ENCODE measurements at regions of chr5 and their contacts with region 1.

Region 1: DNA sequence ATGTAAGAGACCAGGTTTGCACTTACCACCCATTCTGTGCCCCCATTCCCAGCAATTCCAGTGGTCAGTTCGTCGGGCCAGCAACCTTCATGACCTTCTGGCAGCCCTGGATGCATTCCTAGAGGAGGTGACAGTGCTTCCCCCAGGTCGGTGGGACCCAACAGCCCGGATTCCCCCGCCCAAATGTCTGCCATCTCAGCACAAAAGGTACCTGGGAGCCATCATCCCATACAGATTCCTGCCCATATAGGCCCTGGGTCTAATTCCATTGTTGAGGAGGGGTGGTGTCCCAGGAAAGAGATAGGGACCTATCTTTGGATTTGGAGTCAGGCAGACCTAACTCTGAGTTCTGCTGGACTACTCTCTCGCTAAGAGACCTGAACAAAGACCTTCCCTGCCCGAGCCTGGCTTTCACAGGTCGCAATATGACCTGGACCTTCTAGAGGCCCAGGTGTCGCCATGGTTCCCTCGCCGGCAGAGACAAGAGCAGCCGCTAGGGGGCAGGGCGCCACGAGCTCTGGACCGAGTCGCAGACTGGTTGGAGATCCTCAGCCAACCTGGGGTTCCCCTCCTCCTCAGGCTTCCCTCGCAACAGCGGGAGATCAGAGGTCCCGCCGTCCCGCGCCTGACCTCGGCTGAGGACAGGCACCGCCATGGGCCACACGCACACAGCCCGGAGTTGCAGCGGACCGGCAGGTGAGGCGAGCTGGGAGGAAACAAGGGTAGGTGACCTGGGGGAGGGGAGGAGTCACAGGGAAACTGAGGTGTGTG is 3.1 kb downstream of the SLC4A9 start:
- DNase-seq: peak; percentile 66 to 83 (median 72)
- H3K4me3 ChIP-seq: peak overlapping the region; percentile 46
- H3K4me3 Mint-ChIP-seq: peak overlapping the region in 6 of 7 donors; percentile 61 to 83 (median 78)
- H3K27ac ChIP-seq: no peak overlapping the region
- H3K27ac Mint-ChIP-seq: peak overlapping the region in 2 of 8 donors; percentile 51 to 61
- H3K4me1 ChIP-seq: peaks cover 4% of the 10 kb centered on the region
- H3K4me1 Mint-ChIP-seq: peaks cover 6 to 8% (median 6%) of the 10 kb centered on the region in 3 donors
- H3K27me3 ChIP-seq: no peaks in the 10 kb centered on the region
- H3K27me3 Mint-ChIP-seq: no peaks in the 10 kb centered on the region

Region 2: GRCh38 chr5:140244525-140245025 is 118.5 kb before region 1 on chr5:
- CTCF ChIA-PET with region 1: interaction called, 11 read pairs
- POLR2A ChIA-PET with region 1: no interaction called
- DNase-seq: peak; percentile 44 to 71 (median 51)
- H3K4me3 ChIP-seq: no peak overlapping the region
- H3K4me3 Mint-ChIP-seq: no peak overlapping the region
- H3K27ac ChIP-seq: no peak overlapping the region
- H3K27ac Mint-ChIP-seq: peak overlapping the region in 2 of 8 donors; percentile 53 to 71
- H3K4me1 ChIP-seq: peaks cover 10% of the 10 kb centered on the region
- H3K4me1 Mint-ChIP-seq: peaks cover 4 to 8% (median 5%) of the 10 kb centered on the region in 3 donors
- H3K27me3 ChIP-seq: no peaks in the 10 kb centered on the region
- H3K27me3 Mint-ChIP-seq: no peaks in the 10 kb centered on the region

Region 3: DNA sequence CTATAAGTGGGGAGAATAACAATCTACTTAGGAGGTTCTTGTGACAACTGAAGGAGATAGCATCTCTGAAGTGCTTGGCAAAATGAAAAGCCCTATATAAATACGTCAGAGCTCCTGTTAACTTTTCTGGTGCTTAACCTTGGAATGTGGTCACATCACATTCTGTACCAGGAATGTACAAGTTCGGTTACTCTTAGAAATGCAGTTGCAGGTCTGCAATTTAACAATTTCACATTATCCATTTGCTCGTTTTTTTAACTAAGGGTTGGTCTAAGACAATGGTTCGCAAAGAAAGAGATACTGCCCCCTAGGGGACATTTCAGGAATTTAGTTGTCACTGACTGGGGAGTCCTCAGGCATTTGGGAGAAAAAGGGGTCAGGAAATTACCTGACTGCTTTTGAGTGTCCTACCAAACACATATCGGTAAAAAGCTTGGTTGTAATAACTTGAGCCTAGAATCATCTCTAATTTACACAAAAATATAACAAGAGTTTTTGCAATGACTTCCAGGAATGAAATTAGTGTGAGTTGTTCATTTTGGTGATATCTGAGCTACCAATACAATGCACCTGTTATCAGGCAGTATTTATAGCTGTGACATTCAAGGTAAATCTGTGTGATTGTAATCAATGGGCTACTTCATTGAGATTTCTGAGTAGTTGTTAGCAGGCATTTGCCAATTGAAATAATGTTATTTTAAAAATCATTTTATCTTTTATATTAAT is 11.3 kb before region 1 on chr5:
- CTCF ChIA-PET with region 1: interaction called, 24 read pairs
- POLR2A ChIA-PET with region 1: interaction called, 3 read pairs
- DNase-seq: peak in 4 of 5 donors; percentile 42 to 77 (median 67)
- H3K4me3 ChIP-seq: no peak overlapping the region
- H3K4me3 Mint-ChIP-seq: peak overlapping the region in 1 of 7 donors; percentile 47
- H3K27ac ChIP-seq: no peak overlapping the region
- H3K27ac Mint-ChIP-seq: no peak overlapping the region
- H3K4me1 ChIP-seq: peaks cover 9% of the 10 kb centered on the region
- H3K4me1 Mint-ChIP-seq: peaks cover 3 to 10% (median 5%) of the 10 kb centered on the region in 3 donors
- H3K27me3 ChIP-seq: no peaks in the 10 kb centered on the region
- H3K27me3 Mint-ChIP-seq: peaks cover 19 to 42% of the 10 kb centered on the region in 2 donors

Region 4: GRCh38 chr5:140725799-140726471 is 362.9 kb after region 1 on chr5:
- CTCF ChIA-PET with region 1: interaction called, 17 read pairs
- POLR2A ChIA-PET with region 1: no interaction called
- DNase-seq: peak; percentile 43 to 75 (median 52)
- H3K4me3 ChIP-seq: peak overlapping the region; percentile 20
- H3K4me3 Mint-ChIP-seq: peak overlapping the region; percentile 67 to 83 (median 79)
- H3K27ac ChIP-seq: peak overlapping the region; percentile 61
- H3K27ac Mint-ChIP-seq: peak overlapping the region; percentile 0 to 89 (median 75)
- H3K4me1 ChIP-seq: no peaks in the 10 kb centered on the region
- H3K4me1 Mint-ChIP-seq: peaks cover 13 to 23% (median 21%) of the 10 kb centered on the region in 3 donors
- H3K27me3 ChIP-seq: no peaks in the 10 kb centered on the region
- H3K27me3 Mint-ChIP-seq: peaks cover 7 to 15% of the 10 kb centered on the region in 2 donors

Measured in CD8-positive, alpha-beta memory T cell (primary cell).